Activated CD8-positive, alpha-beta T cell treated with anti-CD3 and anti-CD28 coated beads for 36 hours (primary cell): ENCODE measurements at regions of chr12 and their contacts with region 1.

Region 1: GRCh38 chr12:57899010-57899662 is 42.2 kb upstream of the ATP23 start:
- DNase-seq: peak; percentile 96
- ATAC-seq: peak; percentile 93
- H3K4me3 Mint-ChIP-seq: peak overlapping the region; percentile 61
- H3K27ac Mint-ChIP-seq: peak overlapping the region; percentile 100
- H3K4me1 Mint-ChIP-seq: peaks cover 53% of the 10 kb centered on the region
- H3K27me3 Mint-ChIP-seq: no peaks in the 10 kb centered on the region
- CTCF ChIP-seq: no peak

Region 2: DNA sequence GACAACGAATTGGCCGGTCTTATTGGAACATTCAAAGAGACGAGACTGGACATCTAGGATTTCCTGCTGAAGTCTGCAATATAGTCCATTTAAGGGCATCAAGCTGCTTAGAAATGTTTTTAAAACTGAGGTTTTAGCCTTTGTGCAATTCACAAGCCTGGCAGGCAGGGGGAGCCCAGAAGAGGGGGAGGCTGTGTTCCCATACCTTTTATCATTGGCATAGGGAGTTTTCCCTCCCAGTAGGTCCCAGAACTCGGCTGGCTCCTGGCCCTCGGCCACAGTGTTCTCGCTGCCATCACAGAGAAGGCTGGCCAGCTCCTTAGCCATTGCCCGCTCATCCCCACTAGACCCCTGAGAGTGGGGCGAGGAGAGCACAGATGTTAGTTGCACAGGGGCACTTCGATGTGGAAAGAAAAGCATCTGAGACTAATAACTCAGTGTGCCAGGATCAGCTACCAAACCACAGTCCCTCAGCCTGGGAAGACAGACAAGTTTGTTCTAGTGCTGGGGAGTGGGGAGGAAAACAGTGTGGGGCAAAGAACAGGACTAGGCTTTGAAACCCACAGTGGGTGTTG is 95.7 kb before region 1 on chr12:
- CTCF ChIA-PET with region 1: interaction called, 124 read pairs
- POLR2A ChIA-PET with region 1: no interaction called
- intact Hi-C with region 1: no loop called
- DNase-seq: peak; percentile 31
- ATAC-seq: peak; percentile 70
- H3K4me3 Mint-ChIP-seq: no peak overlapping the region
- H3K27ac Mint-ChIP-seq: no peak overlapping the region
- H3K4me1 Mint-ChIP-seq: peaks cover 4% of the 10 kb centered on the region
- H3K27me3 Mint-ChIP-seq: no peaks in the 10 kb centered on the region
- CTCF ChIP-seq: peak; percentile 85

Region 3: DNA sequence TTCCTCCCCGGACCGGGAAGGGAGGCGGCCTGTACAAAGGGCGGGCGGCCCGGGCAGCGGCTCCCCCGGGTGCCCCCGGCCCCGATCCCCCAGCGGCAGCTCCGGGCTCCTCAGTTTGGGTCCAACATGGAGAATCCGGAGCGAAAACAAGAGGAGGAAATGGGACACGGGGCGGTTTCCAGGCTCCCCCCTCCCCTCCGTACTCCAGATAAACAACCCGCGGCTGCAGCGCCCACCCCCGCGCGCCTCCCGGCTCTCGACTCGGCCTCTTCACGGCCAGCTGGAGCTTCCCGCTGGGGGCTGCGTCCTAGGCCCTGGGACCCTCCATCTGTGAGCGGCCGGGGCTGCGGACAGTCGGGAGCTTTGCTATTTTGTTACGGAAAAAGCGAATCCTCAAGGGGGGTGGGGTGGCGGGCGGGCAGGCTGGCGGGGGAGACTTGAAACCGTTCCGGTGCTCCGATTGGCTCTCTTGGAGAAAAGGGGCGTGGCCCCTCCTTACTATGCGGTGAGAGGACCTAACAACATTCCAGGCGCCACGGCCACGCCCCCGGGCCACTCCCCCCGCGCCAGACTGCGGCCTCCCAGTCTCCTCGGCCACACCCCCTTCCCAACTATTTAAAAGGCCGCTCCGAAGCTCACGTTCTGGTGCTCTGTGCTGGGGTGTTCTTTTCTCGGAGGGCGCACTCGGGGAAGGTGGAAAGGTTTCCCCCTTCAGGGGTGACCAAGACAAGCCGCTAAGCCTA is 52.4 kb before region 1 on chr12 and contains the start of gene CTDSP2:
- CTCF ChIA-PET with region 1: interaction called, 61 read pairs
- POLR2A ChIA-PET with region 1: interaction called, 70 read pairs
- intact Hi-C with region 1: loop called (anchors 2 kb)
- DNase-seq: peak; percentile 88
- ATAC-seq: peak; percentile 33
- H3K4me3 Mint-ChIP-seq: peak within 1 kb of the TSS; percentile 81
- H3K27ac Mint-ChIP-seq: peak within 1 kb of the TSS; percentile 92
- H3K4me1 Mint-ChIP-seq: peaks cover 49% of the 10 kb centered on the region
- H3K27me3 Mint-ChIP-seq: peaks cover 8% of the 10 kb centered on the region
- CTCF ChIP-seq: no peak
- total RNA-seq, gene CTDSP2: 67.1 to 67.2 TPM

Region 4: DNA sequence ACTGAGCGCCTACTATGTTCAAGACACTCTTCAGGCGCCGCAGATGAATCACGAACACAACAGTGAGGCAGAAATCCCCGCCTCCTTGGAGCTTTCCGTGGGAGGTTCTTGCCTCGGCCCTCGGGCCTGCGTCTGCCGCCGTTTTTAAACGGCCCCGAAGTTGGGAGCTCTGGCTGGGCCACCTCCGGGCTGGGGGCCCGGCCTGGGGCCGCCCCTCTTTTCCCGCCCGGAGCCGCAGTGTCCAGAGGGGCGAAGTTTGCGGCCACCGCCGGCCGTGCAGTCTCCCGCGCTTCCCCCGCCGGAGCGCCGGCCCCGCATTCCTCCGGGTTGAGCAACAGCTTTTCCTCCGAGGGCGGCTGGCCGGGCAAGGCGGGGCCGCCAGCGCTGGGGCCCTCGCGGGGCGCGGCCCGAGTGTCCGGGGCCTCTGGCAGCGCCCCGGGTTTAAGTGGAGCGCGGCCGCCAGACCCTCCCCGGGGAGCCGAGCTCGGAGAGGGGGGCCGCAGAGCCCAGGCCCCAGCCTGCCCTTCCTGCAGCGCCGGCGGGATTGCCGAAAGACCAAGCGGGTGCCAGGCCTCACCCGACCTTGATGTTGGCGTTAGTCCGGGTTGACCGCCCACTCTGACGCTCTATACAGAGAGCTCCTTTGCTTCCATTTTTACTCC is 33.9 kb before region 1 on chr12:
- CTCF ChIA-PET with region 1: interaction called, 13 read pairs
- POLR2A ChIA-PET with region 1: interaction called, 6 read pairs
- intact Hi-C with region 1: no loop called
- DNase-seq: peak; percentile 87
- ATAC-seq: peak; percentile 96
- H3K4me3 Mint-ChIP-seq: peak overlapping the region; percentile 70
- H3K27ac Mint-ChIP-seq: peak overlapping the region; percentile 45
- H3K4me1 Mint-ChIP-seq: peaks cover 6% of the 10 kb centered on the region
- H3K27me3 Mint-ChIP-seq: peaks cover 6% of the 10 kb centered on the region
- CTCF ChIP-seq: no peak

Region 5: GRCh38 chr12:57888409-57889157 is 10.6 kb before region 1 on chr12:
- CTCF ChIA-PET with region 1: interaction called, 6 read pairs
- POLR2A ChIA-PET with region 1: interaction called, 25 read pairs
- intact Hi-C with region 1: no loop called
- DNase-seq: peak; percentile 59
- ATAC-seq: peak; percentile 84
- H3K4me3 Mint-ChIP-seq: no peak overlapping the region
- H3K27ac Mint-ChIP-seq: no peak overlapping the region
- H3K4me1 Mint-ChIP-seq: peaks cover 9% of the 10 kb centered on the region
- H3K27me3 Mint-ChIP-seq: peaks cover 1% of the 10 kb centered on the region
- CTCF ChIP-seq: no peak